Colonic mucosa (tissue), 4 donors: ENCODE measurements at regions of chr17 and their contacts with region 1.

Region 1: DNA sequence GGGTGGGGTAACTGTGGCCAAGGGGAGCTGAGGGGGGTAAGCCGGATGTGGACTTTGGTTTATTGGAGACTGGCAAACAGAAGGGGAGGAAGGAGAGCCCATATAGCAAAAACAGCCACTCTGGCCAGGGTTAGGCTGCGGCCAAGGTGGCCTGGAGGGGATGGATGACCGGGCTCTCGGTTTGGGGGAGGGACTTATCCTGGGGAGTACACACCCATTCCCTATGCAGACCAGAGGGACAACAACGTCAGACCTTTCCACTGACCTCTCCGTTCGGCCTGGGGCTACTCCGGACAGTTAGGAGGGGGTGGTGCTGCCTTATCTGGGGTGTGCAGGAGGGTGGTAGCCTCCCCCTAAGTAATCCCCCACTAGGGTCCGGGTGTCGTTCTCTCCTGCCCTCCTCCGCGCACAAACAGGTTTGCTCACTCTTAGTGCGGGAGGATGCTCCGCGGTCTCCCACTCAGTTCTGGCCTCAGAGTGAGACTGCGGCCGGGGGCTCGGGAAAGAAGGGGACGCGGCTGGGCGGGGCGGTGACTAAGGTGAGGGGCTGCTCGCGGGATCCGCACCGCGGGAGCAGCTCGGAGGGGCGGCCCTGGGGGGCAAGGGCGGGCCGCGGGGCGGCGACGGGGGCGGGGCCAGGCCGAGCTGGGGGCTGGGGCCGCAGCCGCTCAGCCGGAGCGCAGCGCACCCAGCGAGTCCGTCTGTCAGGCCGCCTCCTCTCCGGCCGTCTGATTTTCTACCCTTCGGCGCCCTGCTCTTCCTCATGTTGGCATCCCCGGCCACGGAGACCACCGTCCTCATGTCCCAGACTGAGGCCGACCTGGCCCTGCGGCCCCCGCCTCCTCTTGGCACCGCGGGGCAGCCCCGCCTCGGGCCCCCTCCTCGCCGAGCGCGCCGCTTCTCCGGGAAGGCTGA is at the start of gene WNK4:
- DNase-seq: peak; percentile 89
- H3K4me3 ChIP-seq: peak within 1 kb of the TSS; percentile 48
- H3K27ac ChIP-seq: peak within 1 kb of the TSS; percentile 88
- H3K4me1 ChIP-seq: no peaks in the 10 kb centered on the region
- H3K27me3 ChIP-seq: peaks cover 6% of the 10 kb centered on the region
- CTCF ChIP-seq: no peak
- total RNA-seq, gene WNK4: 32.6 to 54.6 TPM

Region 2: GRCh38 chr17:42819944-42820535 is 39.8 kb after region 1 on chr17:
- intact Hi-C with region 1: loop called (anchors 5 kb)
- DNase-seq: peak; percentile 55
- H3K4me3 ChIP-seq: no peak overlapping the region
- H3K27ac ChIP-seq: no peak overlapping the region
- H3K4me1 ChIP-seq: peaks cover 11% of the 10 kb centered on the region
- H3K27me3 ChIP-seq: no peaks in the 10 kb centered on the region
- CTCF ChIP-seq: peak; percentile 50